WTC11 (cell line): ENCODE measurements at regions of chr15 and their contacts with region 1.

Region 1: DNA sequence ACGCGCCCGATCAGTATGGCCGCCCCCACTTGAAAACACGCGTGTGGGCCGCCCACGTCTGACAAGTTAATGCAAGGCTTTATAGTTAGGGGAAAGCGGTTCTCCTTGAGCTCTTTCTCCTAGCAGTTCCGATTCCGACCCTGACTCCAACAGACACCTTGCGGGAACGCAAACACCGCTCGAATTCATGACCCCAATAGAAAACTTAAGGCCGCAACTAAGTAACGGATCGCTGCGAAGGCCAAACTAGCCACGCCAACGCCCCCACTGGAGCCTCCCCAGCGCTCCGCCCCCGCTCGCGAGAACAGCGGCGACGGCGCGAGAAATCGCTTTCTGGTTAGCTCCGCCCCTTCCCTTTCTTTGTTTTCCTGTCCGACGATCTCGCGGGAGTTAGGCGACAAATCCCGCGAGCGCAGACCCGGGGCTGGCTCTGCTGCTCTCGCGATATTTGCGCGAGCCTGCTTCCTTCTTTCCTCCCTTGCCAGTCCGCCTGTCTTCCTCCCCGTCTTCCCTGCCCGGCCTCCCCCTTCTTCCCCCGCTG is at the start of gene IREB2:
- DNase-seq: peak; percentile 97
- ATAC-seq: peak; percentile 90
- H3K4me3 Mint-ChIP-seq: peak within 1 kb of the TSS; percentile 86
- H3K27ac Mint-ChIP-seq: peak within 1 kb of the TSS; percentile 96
- H3K4me1 Mint-ChIP-seq: peaks cover 18% of the 10 kb centered on the region
- H3K27me3 Mint-ChIP-seq: no peaks in the 10 kb centered on the region
- CTCF ChIP-seq: no peak
- total RNA-seq, gene IREB2: 86.0 to 89.5 TPM (median 89.3 TPM) in 3 replicates

Region 2: DNA sequence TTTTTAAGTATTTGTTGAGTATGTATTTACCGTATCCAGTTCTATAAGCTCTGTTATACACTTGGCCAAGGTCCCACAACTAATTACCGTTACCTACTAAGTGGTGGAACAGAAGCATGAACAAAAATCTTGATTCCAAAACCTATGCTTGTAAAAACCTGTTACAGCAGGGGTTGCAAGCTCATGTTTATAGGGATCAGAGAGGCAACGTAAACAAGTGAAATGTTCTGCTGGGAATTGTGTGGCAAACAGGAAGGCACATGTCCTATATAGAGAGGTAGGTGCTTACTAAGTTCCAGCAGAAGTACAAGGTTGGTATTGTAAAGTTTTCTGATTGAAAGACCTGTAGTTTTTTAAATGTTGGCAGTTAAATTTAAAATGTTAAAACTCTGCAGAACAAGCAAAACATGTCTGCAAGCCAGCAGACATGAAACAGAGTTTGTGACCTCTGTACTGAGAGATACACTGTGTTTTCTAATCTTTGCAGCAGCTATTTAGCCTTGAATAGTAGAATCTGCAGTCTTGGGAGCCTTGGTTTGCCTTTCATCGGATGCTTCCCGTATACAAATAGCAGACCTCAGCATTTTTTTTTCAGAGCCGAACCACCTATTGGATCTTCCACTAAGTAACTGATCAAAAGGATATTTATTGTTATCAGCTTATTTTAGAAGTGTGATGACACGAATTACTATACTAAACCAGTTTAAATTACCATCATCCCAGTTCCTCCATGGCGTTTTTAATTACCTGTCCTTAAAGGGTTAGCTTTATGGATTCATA is 11.6 kb after region 1 on chr15:
- CTCF ChIA-PET with region 1: interaction called, 10 read pairs
- POLR2A ChIA-PET with region 1: no interaction called
- DNase-seq: no peak
- ATAC-seq: no peak
- H3K4me3 Mint-ChIP-seq: no peak overlapping the region
- H3K27ac Mint-ChIP-seq: no peak overlapping the region
- H3K4me1 Mint-ChIP-seq: peaks cover 26% of the 10 kb centered on the region
- H3K27me3 Mint-ChIP-seq: no peaks in the 10 kb centered on the region
- CTCF ChIP-seq: no peak